ENCODE measurements at regions of chr2 and their contacts with region 1.

Region 1: DNA sequence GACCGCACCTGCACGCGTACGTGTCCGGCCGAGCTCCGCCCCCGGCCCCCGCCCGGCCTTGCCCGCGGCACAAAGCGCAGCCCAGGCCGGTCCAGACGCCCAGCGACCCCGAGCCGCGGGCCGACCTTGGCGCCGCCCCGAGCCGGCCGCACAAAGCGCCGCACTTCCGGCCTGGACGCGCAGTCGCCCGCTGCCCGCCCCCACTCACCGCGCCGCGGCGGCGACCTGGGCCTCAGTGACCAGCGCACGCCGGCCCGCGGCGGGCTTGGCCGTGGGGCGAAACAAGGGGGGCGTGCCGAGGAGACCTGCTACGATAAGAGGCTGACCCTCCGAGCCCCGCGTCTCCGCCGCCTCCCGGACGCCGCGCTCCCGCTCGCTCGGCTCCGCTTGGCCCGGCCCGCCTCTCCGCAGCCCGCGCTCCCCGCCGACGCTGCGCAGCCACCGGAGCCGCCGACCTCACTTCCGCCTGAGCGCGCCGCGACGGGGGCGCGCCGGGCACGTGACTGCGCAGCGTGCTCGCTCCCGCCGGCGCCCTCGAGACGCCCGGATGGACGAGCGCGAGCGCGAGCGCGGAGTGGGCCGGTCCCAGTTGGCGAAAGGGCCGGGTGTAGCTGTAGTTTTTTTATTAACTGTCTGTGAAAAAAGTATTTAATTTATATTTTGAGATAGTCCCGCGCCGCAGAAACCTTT is at the start of gene FAM168B:
- DNase-seq: peak; percentile 92 to 97
- ATAC-seq: peak; percentile 79 to 95 (median 86)
- H3K4me3 ChIP-seq: peak within 1 kb of the TSS; percentile 69
- H3K4me3 Mint-ChIP-seq: peak within 1 kb of the TSS; percentile 93
- H3K27ac ChIP-seq: peak within 1 kb of the TSS; percentile 76
- H3K27ac Mint-ChIP-seq: peak within 1 kb of the TSS; percentile 87 to 98
- H3K4me1 ChIP-seq: peaks cover 20% of the 10 kb centered on the region
- H3K4me1 Mint-ChIP-seq: peaks cover 15 to 22% of the 10 kb centered on the region in 2 donors
- H3K27me3 ChIP-seq: no peaks in the 10 kb centered on the region
- H3K27me3 Mint-ChIP-seq: no peaks in the 10 kb centered on the region
- CTCF ChIP-seq: no peak
- total RNA-seq, gene FAM168B: 56.0 to 70.7 (median 65.3) TPM

Region 2: DNA sequence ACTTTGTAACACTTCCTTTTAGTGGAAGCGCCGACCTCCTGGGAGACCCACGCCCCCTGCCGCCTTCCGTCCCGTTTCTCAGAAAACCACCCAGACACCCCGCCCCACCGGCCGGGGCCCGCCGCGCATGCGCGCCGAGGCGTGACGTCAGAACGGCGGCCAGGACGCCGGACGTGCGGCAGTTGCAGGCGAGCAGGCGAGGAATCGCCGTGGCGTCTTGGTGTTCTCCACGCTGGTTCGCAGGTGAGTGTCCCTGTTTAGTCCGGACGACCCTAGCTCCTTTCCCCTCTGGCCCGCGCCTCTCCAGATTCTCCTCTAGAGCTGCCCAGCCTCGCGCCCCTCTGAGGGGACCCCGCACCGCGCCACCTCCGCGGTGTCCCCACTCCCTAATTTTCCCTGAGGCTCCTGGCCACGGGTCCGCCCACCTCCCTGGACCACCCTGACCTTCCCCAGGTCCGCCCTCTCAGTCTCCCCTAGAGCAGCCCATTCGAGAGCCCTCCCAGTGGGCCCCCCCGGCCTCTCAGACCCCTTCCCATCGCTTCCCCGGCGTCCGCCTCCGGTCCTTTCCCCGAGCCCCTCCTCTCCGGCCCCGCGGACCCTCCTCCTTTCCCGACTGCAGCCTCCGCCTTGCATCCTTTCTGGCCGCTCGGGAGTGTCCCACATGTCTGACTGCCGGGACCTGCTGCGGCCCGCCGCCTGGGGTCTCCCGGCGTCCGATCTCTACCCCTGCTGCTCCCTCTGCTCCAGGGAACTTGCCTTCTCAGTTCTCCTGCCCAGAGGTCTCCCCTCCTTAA is 12.2 kb after region 1 on chr2 and contains the start of gene PLEKHB2:
- intact Hi-C with region 1: loop called (anchors 1 kb)
- DNase-seq: peak; percentile 96
- ATAC-seq: peak; percentile 73 to 89 (median 88)
- H3K4me3 ChIP-seq: peak within 1 kb of the TSS; percentile 100
- H3K4me3 Mint-ChIP-seq: peak within 1 kb of the TSS; percentile 94
- H3K27ac ChIP-seq: peak within 1 kb of the TSS; percentile 84
- H3K27ac Mint-ChIP-seq: peak within 1 kb of the TSS; percentile 89 to 96
- H3K4me1 ChIP-seq: peaks cover 26% of the 10 kb centered on the region
- H3K4me1 Mint-ChIP-seq: peaks cover 41 to 49% of the 10 kb centered on the region in 2 donors
- H3K27me3 ChIP-seq: no peaks in the 10 kb centered on the region
- H3K27me3 Mint-ChIP-seq: no peaks in the 10 kb centered on the region
- CTCF ChIP-seq: no peak
- total RNA-seq, gene PLEKHB2: 75.6 to 78.7 (median 77.4) TPM

Region 3: GRCh38 chr2:131132729-131133128 is 39.6 kb after region 1 on chr2:
- intact Hi-C with region 1: no loop called
- DNase-seq: peak in 1 of 2 donors; percentile 26
- ATAC-seq: peak; percentile 64 to 90 (median 75)
- H3K4me3 ChIP-seq: no peak overlapping the region
- H3K4me3 Mint-ChIP-seq: peak overlapping the region; percentile 37
- H3K27ac ChIP-seq: no peak overlapping the region
- H3K27ac Mint-ChIP-seq: peak overlapping the region in 1 of 2 donors; percentile 50
- H3K4me1 ChIP-seq: peaks cover 8% of the 10 kb centered on the region
- H3K4me1 Mint-ChIP-seq: peaks cover 9 to 18% of the 10 kb centered on the region in 2 donors
- H3K27me3 ChIP-seq: no peaks in the 10 kb centered on the region
- H3K27me3 Mint-ChIP-seq: no peaks in the 10 kb centered on the region
- CTCF ChIP-seq: no peak

Measured in natural killer cell (primary cell).